Sigmoid colon (tissue), 7 donors: ENCODE measurements at regions of chrX and their contacts with region 1.

Region 1: DNA sequence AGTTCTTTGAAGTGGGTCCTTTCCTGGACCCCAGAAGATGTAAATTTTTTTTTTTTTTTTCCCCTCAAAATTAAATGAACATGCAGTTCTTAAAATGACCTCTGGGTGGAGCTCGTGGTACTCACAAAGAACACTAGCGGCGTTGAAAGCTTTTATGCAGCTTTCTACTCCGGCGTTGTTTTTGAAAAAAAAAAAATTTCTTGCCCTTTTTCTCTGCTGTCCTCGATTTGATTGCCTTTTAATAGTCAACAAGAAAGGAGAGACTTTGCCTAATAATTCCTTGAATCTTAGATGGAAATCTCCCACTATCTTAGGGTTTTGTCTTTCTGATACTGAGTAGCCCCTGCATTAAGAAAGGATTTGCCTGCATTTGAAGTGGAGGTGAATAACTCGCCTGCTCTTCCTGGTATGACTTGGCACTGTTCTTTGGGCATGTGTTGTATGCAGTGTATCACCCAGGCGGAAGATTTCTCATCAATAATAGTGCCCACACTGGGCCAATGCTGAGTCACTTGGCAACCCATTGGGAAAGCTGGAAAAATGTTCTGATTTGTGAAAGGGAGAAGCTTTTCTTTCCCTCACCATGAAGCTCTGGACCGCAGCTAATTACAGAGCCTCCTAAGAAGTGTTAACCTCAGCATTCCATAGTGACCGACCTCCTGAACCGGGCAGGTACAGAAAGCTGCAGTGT is 104.0 kb downstream of the PHEX start:
- DNase-seq: no peak
- H3K4me3 ChIP-seq: no peak overlapping the region
- H3K27ac ChIP-seq: peak overlapping the region; percentile 60 to 74 (median 67)
- H3K4me1 ChIP-seq: peaks cover 0 to 22% (median 11%) of the 10 kb centered on the region in 4 donors
- H3K27me3 ChIP-seq: no peaks in the 10 kb centered on the region
- CTCF ChIP-seq: peak in 3 of 4 experiments; percentile 29 to 65 (median 57)
- EP300 ChIP-seq: no peak
- POLR2A ChIP-seq: no peak

Region 2: DNA sequence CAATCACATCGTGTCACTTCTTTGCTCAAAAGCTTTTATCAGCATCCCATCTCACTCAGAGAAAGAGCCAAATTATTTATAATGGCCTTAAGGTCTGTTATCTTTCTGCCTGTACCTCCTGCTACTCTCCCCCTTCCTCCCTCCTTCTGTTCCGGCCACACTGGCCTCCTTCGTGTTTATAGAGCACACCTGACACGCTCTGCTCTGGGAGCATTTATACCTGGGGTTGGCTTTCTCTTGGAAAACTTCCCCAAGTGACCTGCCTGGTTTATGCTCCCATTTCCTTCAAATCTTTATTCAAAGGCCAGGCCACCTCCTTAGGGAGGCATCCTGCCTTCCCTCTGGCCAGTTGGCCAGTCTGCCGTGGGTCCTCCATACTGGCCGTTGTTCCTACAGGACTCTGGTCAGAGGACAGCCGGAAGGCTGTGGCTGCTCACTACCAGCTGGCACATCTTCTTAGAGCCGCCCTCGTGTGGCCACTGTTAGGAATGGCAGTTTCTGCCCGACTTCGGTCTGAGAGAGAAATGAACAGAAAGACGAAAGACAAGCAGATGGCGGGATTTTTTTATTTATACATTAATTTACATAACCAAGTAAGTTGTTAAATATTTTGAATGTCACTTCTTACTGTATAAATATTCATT is 56.4 kb after region 1 on chrX:
- intact Hi-C with region 1: loop called (anchors 5 kb)
- DNase-seq: peak; percentile 80
- H3K4me3 ChIP-seq: no peak overlapping the region
- H3K27ac ChIP-seq: no peak overlapping the region
- H3K4me1 ChIP-seq: no peaks in the 10 kb centered on the region
- H3K27me3 ChIP-seq: no peaks in the 10 kb centered on the region
- CTCF ChIP-seq: peak; percentile 25 to 60 (median 46)
- EP300 ChIP-seq: no peak
- POLR2A ChIP-seq: no peak

Region 3: GRCh38 chrX:22433292-22434070 is 297.3 kb after region 1 on chrX:
- intact Hi-C with region 1: loop called (anchors 5 kb)
- DNase-seq: peak; percentile 64
- H3K4me3 ChIP-seq: no peak overlapping the region
- H3K27ac ChIP-seq: no peak overlapping the region
- H3K4me1 ChIP-seq: peaks cover 0 to 9% (median 1%) of the 10 kb centered on the region in 4 donors
- H3K27me3 ChIP-seq: no peaks in the 10 kb centered on the region
- CTCF ChIP-seq: no peak
- EP300 ChIP-seq: no peak
- POLR2A ChIP-seq: no peak

Region 4: DNA sequence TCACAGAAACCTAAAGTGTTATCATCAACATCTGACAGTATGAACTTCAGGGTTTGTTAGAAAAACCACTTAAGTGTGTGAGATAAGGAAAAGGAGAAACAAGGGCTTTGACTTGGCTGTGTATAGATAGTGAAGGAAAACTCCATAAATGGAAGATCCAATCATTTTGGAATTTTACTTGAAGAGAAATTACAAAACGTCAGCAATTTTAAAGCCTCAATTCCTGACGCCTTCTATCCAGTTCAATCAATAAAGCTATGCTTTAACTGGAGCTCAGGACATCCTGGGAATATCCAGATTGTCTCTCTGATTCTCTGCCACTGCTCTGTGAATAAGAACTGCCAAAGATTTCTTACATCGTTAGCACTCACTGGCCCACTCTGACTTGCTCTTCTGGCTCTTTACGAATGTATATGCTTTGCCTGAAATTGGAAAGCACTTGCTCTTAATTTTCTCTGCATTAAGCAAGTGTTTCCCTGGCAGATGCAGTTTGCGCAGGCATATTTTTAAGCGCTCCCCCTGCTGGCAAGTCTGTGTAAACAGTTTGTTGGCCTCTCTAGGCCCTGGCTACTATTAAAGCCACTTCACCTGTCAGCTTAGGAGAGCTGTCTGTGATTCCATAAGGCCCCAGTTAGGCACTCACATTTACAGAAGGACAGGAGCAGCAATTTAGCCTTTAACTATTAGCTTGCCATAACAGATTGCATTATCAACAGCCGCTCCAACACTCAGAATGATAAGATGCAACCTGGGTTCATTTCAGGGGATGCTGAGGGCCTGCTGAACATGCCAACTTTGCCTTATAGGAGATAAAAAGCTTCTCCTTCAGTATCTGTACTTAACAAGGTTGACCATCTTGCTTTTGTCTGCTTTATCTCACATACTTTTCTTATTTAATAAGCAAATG is 612.2 kb after region 1 on chrX:
- intact Hi-C with region 1: loop called (anchors 5 kb)
- DNase-seq: no peak
- H3K4me3 ChIP-seq: no peak overlapping the region
- H3K27ac ChIP-seq: no peak overlapping the region
- H3K4me1 ChIP-seq: peaks cover 0 to 12% (median 0%) of the 10 kb centered on the region in 4 donors
- H3K27me3 ChIP-seq: no peaks in the 10 kb centered on the region
- CTCF ChIP-seq: peak; percentile 26 to 59 (median 42)
- EP300 ChIP-seq: no peak
- POLR2A ChIP-seq: no peak

Region 5: DNA sequence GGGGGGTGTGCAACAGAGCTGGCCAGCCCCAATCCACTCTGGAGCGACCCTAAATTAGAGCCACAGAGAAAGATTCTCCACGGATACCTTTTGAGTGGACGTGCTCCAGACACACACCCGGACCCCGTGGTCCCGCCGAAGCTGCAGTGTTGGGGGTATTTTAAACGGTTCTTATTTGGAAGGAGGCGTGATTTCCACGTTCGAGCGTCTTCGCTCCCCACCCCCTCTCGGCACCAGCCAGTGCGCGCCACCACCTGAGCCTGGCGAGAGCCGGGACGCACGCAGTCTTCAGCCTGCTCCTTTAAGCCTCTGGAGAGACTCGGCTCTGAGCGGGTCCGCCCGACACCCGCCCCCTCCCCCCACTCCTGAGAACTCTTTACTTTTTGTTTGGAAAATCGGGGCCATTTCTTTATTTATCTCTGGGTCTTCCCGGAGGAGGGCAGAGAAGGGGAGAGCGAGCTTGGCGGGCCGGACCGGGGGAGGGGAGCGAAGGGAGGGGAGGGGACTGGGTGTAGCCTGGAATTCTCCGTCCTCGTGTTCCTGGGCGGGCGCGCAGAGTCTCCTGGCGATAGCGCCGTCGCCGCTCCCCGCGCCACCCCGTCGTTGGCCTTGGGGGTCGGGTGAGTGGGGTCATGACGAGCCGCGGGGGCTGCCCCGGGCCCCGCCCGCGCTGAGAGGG is 1197.8 kb after region 1 on chrX:
- intact Hi-C with region 1: loop called (anchors 10 kb)
- DNase-seq: peak; percentile 71
- H3K4me3 ChIP-seq: peak overlapping the region; percentile 45 to 61 (median 56)
- H3K27ac ChIP-seq: peak overlapping the region; percentile 3 to 80 (median 74)
- H3K4me1 ChIP-seq: no peaks in the 10 kb centered on the region
- H3K27me3 ChIP-seq: no peaks in the 10 kb centered on the region
- CTCF ChIP-seq: no peak
- EP300 ChIP-seq: no peak
- POLR2A ChIP-seq: no peak

Region 6: GRCh38 chrX:23434356-23434884 is 1298.3 kb after region 1 on chrX:
- intact Hi-C with region 1: loop called (anchors 10 kb)
- DNase-seq: peak; percentile 91
- H3K4me3 ChIP-seq: no peak overlapping the region
- H3K27ac ChIP-seq: peak overlapping the region; percentile 47 to 57 (median 50)
- H3K4me1 ChIP-seq: peaks cover 0 to 18% (median 13%) of the 10 kb centered on the region in 4 donors
- H3K27me3 ChIP-seq: no peaks in the 10 kb centered on the region
- CTCF ChIP-seq: no peak
- EP300 ChIP-seq: no peak
- POLR2A ChIP-seq: no peak